PC-9 (cell line): ENCODE measurements at regions of chr3 and their contacts with region 1.

Region 1: DNA sequence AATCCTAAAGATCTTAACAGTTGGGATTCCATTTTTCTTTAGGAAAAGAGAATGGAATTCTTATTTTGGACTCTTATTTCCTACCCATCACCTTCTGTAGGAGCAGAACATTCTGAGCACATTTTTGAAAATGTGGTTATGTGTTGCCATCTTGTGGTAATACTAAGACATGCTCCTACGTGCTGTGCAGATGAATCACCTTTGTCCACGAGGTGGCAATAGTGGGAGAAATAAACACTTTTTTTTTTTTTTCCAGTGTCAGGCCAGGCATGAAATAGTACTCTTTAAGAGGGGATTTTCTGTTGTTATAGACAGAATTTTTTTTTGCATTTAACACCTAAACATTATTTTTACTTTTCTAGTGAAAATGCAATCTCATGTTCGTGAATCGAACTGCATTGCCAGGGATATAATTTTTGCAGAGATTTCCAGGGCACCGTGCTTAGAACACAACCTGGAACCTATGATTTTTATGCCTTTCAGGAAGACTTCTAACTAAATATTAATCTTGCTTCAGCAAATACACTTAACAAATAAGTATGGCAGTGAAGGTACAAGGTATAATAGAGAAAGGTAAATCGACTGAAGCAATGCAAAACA is 196.6 kb downstream of the GAP43 start:
- DNase-seq: peak; percentile 61 to 63
- H3K4me3 ChIP-seq: no peak overlapping the region
- H3K27ac ChIP-seq: no peak overlapping the region
- H3K4me1 ChIP-seq: no peaks in the 10 kb centered on the region
- H3K27me3 ChIP-seq: no peaks in the 10 kb centered on the region
- CTCF ChIP-seq: peak; percentile 91

Region 2: DNA sequence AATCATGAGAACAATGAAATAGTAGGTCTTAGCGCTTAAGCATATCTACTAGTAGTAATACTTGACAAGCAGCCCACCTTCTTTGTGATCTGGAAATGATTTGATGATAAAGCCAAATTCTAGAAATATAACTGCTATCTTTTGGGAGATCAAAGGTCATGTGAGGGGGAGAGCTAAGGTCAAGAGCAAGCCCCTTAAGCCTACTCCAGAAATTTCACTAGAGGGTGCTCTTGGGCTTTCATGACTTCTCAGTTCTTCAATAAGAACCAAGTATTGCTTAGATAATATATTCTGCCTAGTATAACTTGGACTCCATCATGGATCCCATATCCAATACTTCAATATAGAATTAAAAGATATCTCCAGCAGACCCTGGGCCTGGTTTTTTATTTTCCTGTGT is 992.4 kb before region 1 on chr3:
- CTCF ChIA-PET with region 1: no interaction called
- POLR2A ChIA-PET with region 1: no interaction called
- intact Hi-C with region 1: loop called (anchors 2 kb)
- DNase-seq: peak in 1 of 2 experiments; percentile 2
- H3K4me3 ChIP-seq: no peak overlapping the region
- H3K27ac ChIP-seq: no peak overlapping the region
- H3K4me1 ChIP-seq: no peaks in the 10 kb centered on the region
- H3K27me3 ChIP-seq: no peaks in the 10 kb centered on the region
- CTCF ChIP-seq: peak; percentile 64

Region 3: DNA sequence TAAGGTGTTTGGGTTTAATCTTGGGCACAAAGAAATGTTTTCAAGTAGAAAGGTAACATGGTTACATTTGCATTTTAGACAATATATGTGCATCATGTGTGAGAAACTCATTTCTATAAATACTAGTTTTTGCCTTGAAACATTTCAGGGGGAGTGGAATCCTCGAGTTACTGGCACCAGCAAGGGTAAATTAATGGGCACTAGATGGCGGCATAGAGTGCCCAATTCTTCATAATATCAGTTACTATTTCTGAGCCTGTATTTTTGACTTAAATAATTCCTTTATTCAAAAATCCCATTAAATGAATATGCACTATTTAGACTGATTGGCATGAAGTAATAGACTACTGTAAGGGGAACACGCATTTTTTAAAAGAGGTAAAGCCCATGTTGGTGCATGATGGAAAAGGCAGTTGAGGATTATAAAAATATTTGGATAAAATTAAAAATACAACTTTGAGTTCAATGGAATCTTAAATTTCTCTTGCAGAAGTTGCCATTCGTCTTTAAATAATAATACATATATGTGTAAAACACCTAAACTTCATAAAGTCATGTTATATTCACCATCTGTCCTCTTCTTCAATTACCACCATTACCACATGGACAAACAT is 779.1 kb before region 1 on chr3:
- CTCF ChIA-PET with region 1: no interaction called
- POLR2A ChIA-PET with region 1: no interaction called
- intact Hi-C with region 1: loop called (anchors 5 kb)
- DNase-seq: peak; percentile 23 to 35
- H3K4me3 ChIP-seq: no peak overlapping the region
- H3K27ac ChIP-seq: no peak overlapping the region
- H3K4me1 ChIP-seq: no peaks in the 10 kb centered on the region
- H3K27me3 ChIP-seq: no peaks in the 10 kb centered on the region
- CTCF ChIP-seq: peak; percentile 69

Region 4: DNA sequence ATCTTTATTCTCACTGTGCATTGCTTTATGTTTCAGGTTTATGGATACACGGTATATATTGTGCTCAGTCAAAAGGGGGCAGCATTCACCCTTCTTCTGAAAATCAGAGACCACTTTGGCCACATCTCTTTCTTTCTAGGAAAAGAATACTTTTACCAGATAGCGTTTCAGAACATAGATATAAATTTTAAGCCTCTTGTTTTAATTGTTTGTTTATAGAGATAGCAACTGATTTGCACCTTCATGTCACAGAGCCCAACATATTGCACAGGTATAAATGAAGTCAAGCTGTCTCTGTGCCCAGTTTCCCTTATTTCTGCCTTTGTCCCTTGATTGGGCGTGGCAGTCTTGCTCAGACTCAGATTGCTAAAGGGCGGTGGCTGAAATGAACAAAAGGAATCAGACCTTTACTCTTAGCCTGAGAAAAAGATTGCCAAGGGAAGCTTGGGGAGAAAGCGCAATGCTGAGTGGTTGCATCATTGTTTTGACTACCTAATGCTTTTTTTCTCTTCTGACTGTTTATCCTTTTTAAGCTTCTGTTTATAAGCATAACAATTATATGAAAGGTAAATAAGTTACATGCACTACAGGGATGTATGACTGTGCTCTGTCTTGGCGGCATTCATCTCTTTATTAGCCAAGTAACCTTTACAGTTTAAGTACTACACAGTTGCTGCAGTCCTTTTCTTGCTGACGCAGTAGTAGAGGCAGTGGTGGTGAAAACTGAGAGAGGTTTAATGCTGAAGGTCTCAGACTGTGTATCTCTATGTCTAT is 602.0 kb before region 1 on chr3:
- CTCF ChIA-PET with region 1: interaction called, 4 read pairs
- POLR2A ChIA-PET with region 1: no interaction called
- intact Hi-C with region 1: loop called (anchors 1 kb)
- DNase-seq: peak; percentile 40 to 51
- H3K4me3 ChIP-seq: no peak overlapping the region
- H3K27ac ChIP-seq: no peak overlapping the region
- H3K4me1 ChIP-seq: peaks cover 7% of the 10 kb centered on the region
- H3K27me3 ChIP-seq: no peaks in the 10 kb centered on the region
- CTCF ChIP-seq: peak; percentile 84

Region 5: DNA sequence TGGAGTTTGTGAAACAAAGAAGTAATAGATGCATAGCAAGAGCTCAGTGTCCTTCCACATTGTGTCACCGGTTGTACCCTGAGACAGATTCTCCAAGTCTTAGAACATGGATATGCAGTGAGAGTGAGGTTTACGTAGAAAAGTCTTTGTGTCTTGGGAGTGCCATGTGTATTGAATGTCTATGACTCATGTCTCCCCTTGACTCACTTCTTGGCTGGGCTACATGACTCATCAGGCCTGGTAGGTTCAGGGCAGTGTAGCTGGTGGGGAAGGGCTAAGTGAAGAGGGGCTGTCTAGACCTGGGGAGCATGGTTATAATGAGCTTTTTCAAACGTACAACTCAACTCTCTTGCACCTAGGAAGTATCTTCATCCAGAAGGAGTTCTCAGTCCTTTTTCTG is 29.1 kb before region 1 on chr3:
- CTCF ChIA-PET with region 1: no interaction called
- POLR2A ChIA-PET with region 1: no interaction called
- intact Hi-C with region 1: no loop called
- DNase-seq: peak; percentile 79 to 91
- H3K4me3 ChIP-seq: peak overlapping the region; percentile 5; the same call in 1 of the 2 replicates
- H3K27ac ChIP-seq: peak overlapping the region; percentile 89
- H3K4me1 ChIP-seq: peaks cover 54% of the 10 kb centered on the region
- H3K27me3 ChIP-seq: no peaks in the 10 kb centered on the region
- CTCF ChIP-seq: no peak

Region 6: DNA sequence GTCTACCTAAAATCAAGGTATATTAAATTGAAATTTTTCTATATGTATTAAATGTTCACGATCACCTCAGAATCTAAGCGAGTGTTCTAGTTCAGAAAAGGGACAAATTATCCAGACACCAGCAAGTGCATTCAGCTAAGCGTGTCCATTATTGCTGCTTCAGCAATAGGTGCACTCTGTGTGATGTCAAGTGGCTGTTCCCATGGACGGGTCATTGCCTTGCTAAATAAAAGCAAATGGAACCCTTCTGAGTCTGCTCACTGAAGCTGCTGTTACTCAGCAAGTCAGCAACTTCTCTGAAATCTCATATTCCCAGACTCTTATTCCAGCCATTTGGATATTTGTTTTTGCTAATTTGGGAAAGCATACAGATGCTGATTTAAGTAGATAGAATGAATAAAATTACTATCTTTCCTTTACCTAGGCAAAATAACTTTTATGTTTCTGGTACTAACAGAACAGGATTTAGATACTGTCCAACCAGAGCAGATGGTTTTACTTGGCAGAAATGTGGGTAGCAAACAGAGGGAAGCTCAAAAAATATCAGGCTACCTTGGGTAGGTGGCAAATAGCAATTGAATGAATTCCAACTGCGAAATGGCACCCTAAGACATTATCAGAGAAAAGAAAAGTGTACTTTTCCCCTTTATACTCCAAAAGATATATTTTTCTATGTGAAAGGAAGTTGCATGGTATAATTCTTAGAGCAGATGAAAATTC is 210.4 kb after region 1 on chr3:
- CTCF ChIA-PET with region 1: no interaction called
- POLR2A ChIA-PET with region 1: no interaction called
- intact Hi-C with region 1: no loop called
- DNase-seq: no peak
- H3K4me3 ChIP-seq: no peak overlapping the region
- H3K27ac ChIP-seq: no peak overlapping the region
- H3K4me1 ChIP-seq: no peaks in the 10 kb centered on the region
- H3K27me3 ChIP-seq: no peaks in the 10 kb centered on the region
- CTCF ChIP-seq: no peak

Region 7: GRCh38 chr3:116757315-116757714 is 937.4 kb after region 1 on chr3:
- CTCF ChIA-PET with region 1: no interaction called
- POLR2A ChIA-PET with region 1: no interaction called
- intact Hi-C with region 1: loop called (anchors 1 kb)
- DNase-seq: no peak
- H3K4me3 ChIP-seq: no peak overlapping the region
- H3K27ac ChIP-seq: no peak overlapping the region
- H3K4me1 ChIP-seq: no peaks in the 10 kb centered on the region
- H3K27me3 ChIP-seq: no peaks in the 10 kb centered on the region
- CTCF ChIP-seq: no peak